AG04450 (cell line): ENCODE measurements at regions of chr5 and their contacts with region 1.

Region 1: GRCh38 chr5:149834246-149834855 is 104.2 kb downstream of the PPARGC1B start:
- DNase-seq: peak; percentile 86
- H3K4me3 ChIP-seq: no peak overlapping the region
- H3K27ac ChIP-seq: no peak overlapping the region
- H3K27me3 ChIP-seq: peaks cover 3% of the 10 kb centered on the region
- CTCF ChIP-seq: peak; percentile 87

Region 2: DNA sequence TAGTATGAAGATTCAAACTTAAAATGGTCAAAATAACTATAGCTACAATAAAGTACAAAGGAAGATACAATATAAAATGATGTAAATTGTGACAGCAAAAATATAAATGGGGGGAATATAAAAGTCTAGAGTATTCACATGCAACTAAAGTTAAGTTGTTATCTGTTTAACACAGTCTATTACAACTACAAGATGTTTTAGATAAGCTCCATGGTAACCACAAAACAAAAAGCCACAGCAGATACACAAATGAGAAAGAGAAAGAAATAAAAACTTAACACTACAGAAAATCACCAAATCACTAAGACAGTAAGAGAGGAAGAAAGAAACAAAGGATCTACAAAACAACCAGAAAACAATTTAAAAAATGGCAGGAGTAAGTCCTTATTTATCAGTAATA is 754.5 kb before region 1 on chr5:
- CTCF ChIA-PET with region 1: no interaction called
- POLR2A ChIA-PET with region 1: no interaction called
- DNase-seq: no peak
- H3K4me3 ChIP-seq: no peak overlapping the region
- H3K27ac ChIP-seq: no peak overlapping the region
- H3K27me3 ChIP-seq: peaks cover 2% of the 10 kb centered on the region
- CTCF ChIP-seq: no peak

Region 3: DNA sequence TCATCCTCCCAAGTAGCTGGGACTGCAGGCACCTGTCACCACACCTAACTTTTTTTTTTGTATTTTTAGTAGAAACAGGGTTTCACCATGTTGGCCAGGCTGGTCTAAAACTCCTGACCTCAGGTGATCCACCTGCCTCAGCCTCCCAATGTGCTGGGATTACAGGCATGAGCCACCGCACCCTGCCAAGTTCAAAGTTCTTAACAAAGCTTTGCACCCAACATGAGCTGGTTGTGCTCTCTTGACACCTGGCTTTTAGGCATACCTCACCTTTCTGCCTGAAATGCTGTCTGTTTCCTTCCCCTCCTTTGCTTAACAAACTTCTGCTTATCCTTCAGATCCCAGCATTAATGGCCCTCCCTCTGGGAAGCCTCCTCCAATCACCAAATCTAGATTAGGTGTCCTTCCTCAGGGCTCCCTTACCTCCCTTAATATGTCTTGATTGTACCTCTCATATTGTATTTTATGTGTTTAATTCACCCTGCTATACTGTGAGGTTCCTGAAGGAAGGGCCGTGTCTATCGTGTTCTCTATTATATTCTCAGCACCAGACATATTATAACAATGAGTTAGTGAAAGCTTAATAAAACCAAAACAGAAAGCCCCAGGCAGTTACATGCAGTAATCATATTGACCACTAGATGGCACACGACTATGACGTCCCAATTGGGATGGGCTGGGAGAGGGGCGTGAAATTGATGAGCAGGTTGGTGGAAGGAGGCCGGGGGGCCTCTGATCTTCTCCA is 167.1 kb before region 1 on chr5:
- CTCF ChIA-PET with region 1: interaction called, 47 read pairs
- POLR2A ChIA-PET with region 1: no interaction called
- DNase-seq: no peak
- H3K4me3 ChIP-seq: no peak overlapping the region
- H3K27ac ChIP-seq: no peak overlapping the region
- H3K27me3 ChIP-seq: peaks cover 7% of the 10 kb centered on the region
- CTCF ChIP-seq: peak; percentile 79

Region 4: GRCh38 chr5:149820536-149821510 is 13.5 kb before region 1 on chr5:
- CTCF ChIA-PET with region 1: interaction called, 13 read pairs
- POLR2A ChIA-PET with region 1: no interaction called
- DNase-seq: no peak
- H3K4me3 ChIP-seq: no peak overlapping the region
- H3K27ac ChIP-seq: no peak overlapping the region
- H3K27me3 ChIP-seq: no peaks in the 10 kb centered on the region
- CTCF ChIP-seq: no peak

Region 5: GRCh38 chr5:149969181-149969930 is 135.0 kb after region 1 on chr5:
- CTCF ChIA-PET with region 1: interaction called, 367 read pairs
- POLR2A ChIA-PET with region 1: no interaction called
- DNase-seq: no peak
- H3K4me3 ChIP-seq: no peak overlapping the region
- H3K27ac ChIP-seq: no peak overlapping the region
- H3K27me3 ChIP-seq: no peaks in the 10 kb centered on the region
- CTCF ChIP-seq: no peak

Region 6: GRCh38 chr5:149979896-149980295 is 145.5 kb after region 1 on chr5:
- CTCF ChIA-PET with region 1: interaction called, 22 read pairs
- POLR2A ChIA-PET with region 1: no interaction called
- DNase-seq: no peak
- H3K4me3 ChIP-seq: no peak overlapping the region
- H3K27ac ChIP-seq: no peak overlapping the region
- H3K27me3 ChIP-seq: no peaks in the 10 kb centered on the region
- CTCF ChIP-seq: no peak

Region 7: GRCh38 chr5:149990518-149991376 is 156.4 kb after region 1 on chr5:
- CTCF ChIA-PET with region 1: interaction called, 478 read pairs
- POLR2A ChIA-PET with region 1: interaction called, 8 read pairs
- DNase-seq: peak; percentile 56
- H3K4me3 ChIP-seq: no peak overlapping the region
- H3K27ac ChIP-seq: no peak overlapping the region
- H3K27me3 ChIP-seq: no peaks in the 10 kb centered on the region
- CTCF ChIP-seq: peak; percentile 98

Region 8: GRCh38 chr5:150217873-150218692 is 383.7 kb after region 1 on chr5:
- CTCF ChIA-PET with region 1: interaction called, 11 read pairs
- POLR2A ChIA-PET with region 1: no interaction called
- DNase-seq: peak; percentile 69
- H3K4me3 ChIP-seq: no peak overlapping the region
- H3K27ac ChIP-seq: no peak overlapping the region
- H3K27me3 ChIP-seq: no peaks in the 10 kb centered on the region
- CTCF ChIP-seq: peak; percentile 87